Esophagus muscularis mucosa (tissue), 4 donors: ENCODE measurements at regions of chr10 and their contacts with region 1.

Region 1: GRCh38 chr10:11515596-11516430 is 95.6 kb downstream of the USP6NL start:
- DNase-seq: no peak
- H3K4me3 ChIP-seq: no peak overlapping the region
- H3K27ac ChIP-seq: no peak overlapping the region
- H3K4me1 ChIP-seq: peaks cover 0 to 8% (median 0%) of the 10 kb centered on the region in 4 donors
- H3K27me3 ChIP-seq: no peaks in the 10 kb centered on the region
- CTCF ChIP-seq: peak; percentile 79 to 85 (median 81)
- EP300 ChIP-seq: no peak
- POLR2A ChIP-seq: no peak

Region 2: DNA sequence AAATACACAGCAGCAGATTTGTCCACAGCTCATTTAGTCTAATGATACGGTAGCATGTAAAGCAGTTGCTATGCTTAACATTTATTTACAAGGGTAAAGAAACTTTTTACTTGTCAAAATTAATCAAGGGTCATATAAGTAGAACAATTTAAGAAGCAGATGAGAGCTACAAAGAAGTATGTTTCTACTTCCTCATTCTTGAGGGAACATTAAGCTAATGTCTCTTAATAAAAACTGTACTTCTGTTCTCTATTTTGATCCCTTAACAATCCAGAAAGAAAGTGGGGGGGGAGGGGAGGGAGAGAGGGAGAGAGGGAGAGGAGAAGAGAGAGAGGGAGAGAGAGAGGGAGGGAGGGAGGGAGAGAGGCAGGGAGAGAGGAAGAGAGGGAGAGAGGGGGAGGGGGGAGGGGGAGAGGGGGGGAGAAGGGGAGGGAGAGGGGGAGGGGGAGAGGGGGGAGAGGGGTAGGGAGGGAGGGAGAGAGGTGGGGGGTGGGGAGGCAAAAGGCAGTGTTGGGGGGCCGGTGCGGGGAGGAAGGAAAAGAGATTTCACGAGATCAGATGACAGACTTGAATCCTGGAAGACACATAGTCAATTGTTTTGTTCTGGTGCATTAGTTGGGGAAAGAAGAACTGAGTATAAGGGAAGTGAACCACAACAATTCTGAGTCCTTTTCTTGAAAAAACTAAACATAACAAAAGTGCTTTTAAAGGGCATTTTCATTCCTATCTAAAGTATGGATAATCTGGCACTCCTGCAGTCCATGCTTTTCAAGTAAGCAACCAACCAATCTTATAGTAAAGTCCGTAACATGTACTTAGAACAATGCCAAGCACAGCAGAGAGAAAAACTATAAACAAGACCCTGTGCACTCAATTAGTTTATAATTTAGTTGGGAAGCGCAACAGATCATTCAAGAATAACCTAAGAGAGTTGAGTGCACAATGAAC is 32.3 kb before region 1 on chr10:
- intact Hi-C with region 1: no loop called
- DNase-seq: no peak
- H3K4me3 ChIP-seq: no peak overlapping the region
- H3K27ac ChIP-seq: no peak overlapping the region
- H3K4me1 ChIP-seq: no peaks in the 10 kb centered on the region
- H3K27me3 ChIP-seq: no peaks in the 10 kb centered on the region
- CTCF ChIP-seq: no peak
- EP300 ChIP-seq: no peak
- POLR2A ChIP-seq: no peak

Region 3: DNA sequence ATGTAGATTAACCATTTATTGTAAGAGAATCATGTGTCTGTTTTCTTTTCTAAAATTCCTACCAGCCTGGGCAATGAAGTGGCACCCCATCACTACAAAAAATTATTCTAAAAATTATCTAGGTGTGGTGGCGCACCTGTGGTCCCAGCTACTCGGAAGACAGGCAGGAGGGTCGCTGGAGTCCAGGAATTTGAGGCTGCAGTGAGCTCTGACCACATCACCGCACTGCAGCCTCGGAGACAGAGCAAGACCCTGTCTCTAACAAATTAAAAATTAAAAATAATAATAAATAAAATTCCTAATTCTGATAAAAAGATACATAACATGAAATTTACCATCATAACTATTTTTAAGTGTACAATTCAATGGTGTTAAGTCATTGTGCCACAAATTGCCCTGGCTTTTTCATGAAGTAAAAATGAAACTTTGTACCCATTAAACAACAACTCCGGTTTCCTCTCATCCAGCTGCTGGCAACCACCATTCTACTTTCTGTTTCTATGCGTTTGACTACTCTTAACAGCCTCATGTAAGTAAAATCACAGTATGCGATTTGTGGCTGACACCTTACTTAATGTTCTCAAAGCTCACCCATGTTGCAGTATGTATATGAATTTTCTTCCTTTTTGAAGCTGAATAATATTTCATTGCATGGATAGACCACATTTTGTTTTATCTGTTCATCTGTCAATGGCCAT is 116.2 kb after region 1 on chr10:
- intact Hi-C with region 1: no loop called
- DNase-seq: no peak
- H3K4me3 ChIP-seq: no peak overlapping the region
- H3K27ac ChIP-seq: no peak overlapping the region
- H3K4me1 ChIP-seq: no peaks in the 10 kb centered on the region
- H3K27me3 ChIP-seq: no peaks in the 10 kb centered on the region
- CTCF ChIP-seq: no peak
- EP300 ChIP-seq: no peak
- POLR2A ChIP-seq: no peak

Region 4: DNA sequence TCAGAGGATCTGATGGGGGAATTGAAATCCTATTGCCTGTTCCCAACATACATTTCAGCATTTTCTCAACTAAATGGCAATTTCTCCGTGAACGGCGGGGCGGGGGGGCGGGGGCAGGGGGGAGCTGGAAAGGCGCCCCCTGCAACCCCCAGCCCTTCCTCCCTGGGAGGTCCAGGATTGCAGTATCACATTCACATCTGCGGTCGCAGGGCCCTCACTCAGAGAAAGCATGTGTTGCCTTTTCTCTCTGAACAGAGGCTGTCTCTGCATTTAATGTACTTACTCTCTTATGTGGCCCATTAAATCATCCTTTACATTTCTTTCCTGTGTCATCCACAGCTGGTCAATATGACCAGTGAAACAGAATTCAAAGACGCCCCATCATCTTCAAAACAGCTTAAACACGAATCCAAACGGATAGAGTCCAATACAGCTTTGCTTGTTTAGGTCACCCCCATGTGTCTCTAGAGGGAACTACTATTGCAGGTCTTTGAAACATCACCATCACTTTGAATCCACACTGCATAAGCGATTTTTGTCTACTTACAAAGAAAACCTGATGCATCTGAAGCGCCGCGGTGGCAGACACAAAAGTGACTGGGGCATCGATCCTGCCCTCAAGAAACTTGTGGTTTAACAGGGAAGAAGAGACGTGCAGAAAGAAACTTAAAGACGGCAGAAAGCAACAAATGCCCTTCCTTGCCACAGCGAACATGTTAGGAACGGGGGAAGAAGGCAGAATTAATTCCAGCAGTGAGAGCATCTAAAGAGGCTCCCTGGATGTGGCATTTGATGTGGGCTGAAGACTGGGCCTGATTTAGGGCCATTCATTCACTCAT is 209.3 kb after region 1 on chr10:
- intact Hi-C with region 1: loop called (anchors 5 kb)
- DNase-seq: no peak
- H3K4me3 ChIP-seq: no peak overlapping the region
- H3K27ac ChIP-seq: no peak overlapping the region
- H3K4me1 ChIP-seq: no peaks in the 10 kb centered on the region
- H3K27me3 ChIP-seq: no peaks in the 10 kb centered on the region
- CTCF ChIP-seq: peak; percentile 53 to 63 (median 53)
- EP300 ChIP-seq: no peak
- POLR2A ChIP-seq: no peak

Region 5: DNA sequence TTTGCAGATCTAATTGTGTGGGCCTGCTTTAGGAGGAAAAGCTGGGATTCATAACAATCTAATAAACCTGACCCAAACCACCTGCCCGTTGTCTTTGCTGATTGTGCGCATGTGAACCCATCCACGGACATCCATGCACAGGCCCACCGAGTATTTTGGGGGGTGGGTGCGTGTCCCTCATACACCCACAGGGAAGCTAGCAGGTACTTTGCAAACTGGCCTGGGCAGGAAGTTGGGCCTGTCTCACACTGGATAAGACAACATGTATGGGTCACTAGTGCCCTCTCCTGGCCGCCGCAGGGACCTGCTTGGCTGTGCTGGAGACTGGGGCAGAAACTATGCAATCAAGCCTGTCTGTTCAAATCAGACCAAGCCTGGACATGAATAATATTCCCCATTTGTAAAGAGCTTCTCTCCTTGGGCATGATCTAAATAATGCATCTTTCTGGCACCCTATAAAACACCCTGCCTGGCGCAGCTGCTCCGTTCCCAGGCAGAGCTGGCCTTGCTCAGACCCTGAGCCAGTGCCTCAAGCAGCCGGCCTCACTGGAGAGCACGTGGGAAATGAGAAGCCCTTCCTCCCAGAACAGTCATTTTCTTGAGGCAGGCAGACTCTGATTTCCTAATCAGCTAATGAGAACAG is 242.1 kb after region 1 on chr10:
- intact Hi-C with region 1: loop called (anchors 1 kb)
- DNase-seq: peak; percentile 95
- H3K4me3 ChIP-seq: no peak overlapping the region
- H3K27ac ChIP-seq: peak overlapping the region; percentile 39 to 68 (median 42)
- H3K4me1 ChIP-seq: peaks cover 21 to 51% (median 24%) of the 10 kb centered on the region in 4 donors
- H3K27me3 ChIP-seq: no peaks in the 10 kb centered on the region
- CTCF ChIP-seq: peak; percentile 89 to 96 (median 89)
- EP300 ChIP-seq: no peak
- POLR2A ChIP-seq: no peak